ENCODE measurements at regions of chr6 and their contacts with region 1.

Region 1: DNA sequence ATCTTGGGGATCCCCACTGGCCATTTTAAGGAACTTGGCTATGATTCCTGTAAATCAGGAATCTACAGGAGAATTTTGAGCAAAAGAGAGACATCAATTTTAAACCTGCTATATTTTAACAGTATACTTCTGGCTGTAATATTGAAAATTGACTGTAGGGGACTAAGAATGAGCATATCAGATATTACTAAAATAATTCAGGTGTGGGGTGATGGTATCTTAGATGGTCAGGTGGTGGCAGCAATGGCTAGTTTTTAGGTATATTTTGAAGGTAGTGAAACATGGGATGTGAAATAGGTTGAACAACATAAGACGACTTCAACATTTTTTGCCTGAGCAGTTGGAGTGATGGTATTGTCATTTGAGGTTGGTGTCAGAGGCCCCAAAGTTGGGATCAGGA is 32.1 kb downstream of the FAM83B start:
- DNase-seq: peak; percentile 24
- H3K4me3 Mint-ChIP-seq: no peak overlapping the region
- H3K27ac Mint-ChIP-seq: no peak overlapping the region
- H3K4me1 Mint-ChIP-seq: peaks cover 18% of the 10 kb centered on the region
- H3K27me3 Mint-ChIP-seq: no peaks in the 10 kb centered on the region
- CTCF ChIP-seq: no peak

Region 2: DNA sequence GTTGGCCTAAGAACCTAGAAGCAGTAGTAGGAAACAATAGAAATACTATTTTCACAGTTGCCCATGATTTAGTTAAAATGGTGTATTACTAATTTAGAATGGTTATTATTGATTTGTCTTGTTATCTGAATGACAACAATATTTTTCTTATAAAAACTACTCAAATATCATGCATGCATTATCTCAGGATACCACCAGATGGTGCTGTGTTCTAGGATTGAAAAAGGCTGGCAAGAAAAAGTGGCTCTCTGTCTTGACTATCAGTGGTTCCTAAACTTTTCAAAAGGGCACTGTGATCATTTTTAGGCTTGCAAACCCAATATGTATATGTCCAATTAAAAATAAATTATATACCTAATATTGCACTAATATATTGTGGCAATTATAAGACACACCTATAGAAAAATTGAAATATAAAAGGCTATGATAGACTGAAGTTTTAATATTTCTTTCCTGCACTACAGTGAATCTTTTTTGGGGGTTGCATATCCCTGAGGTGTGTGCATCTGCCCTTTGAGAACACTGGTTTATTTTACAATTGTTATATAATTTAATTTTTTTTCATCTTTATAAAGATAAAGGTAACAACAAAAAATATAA is 899.1 kb before region 1 on chr6:
- CTCF ChIA-PET with region 1: no interaction called
- intact Hi-C with region 1: loop called (anchors 5 kb)
- DNase-seq: peak; percentile 43
- H3K4me3 Mint-ChIP-seq: no peak overlapping the region
- H3K27ac Mint-ChIP-seq: no peak overlapping the region
- H3K4me1 Mint-ChIP-seq: peaks cover 37% of the 10 kb centered on the region
- H3K27me3 Mint-ChIP-seq: no peaks in the 10 kb centered on the region
- CTCF ChIP-seq: peak; percentile 72

Region 3: GRCh38 chr6:54860739-54861138 is 17.9 kb before region 1 on chr6:
- CTCF ChIA-PET with region 1: interaction called, 3 read pairs
- intact Hi-C with region 1: loop called (anchors 2 kb)
- DNase-seq: peak; percentile 69
- H3K4me3 Mint-ChIP-seq: peak overlapping the region; percentile 64
- H3K27ac Mint-ChIP-seq: peak overlapping the region; percentile 98
- H3K4me1 Mint-ChIP-seq: peaks cover 74% of the 10 kb centered on the region
- H3K27me3 Mint-ChIP-seq: no peaks in the 10 kb centered on the region
- CTCF ChIP-seq: no peak

Region 4: GRCh38 chr6:54980511-54981275 is 102.0 kb after region 1 on chr6:
- CTCF ChIA-PET with region 1: no interaction called
- intact Hi-C with region 1: loop called (anchors 10 kb)
- DNase-seq: no peak
- H3K4me3 Mint-ChIP-seq: no peak overlapping the region
- H3K27ac Mint-ChIP-seq: peak overlapping the region; percentile 76
- H3K4me1 Mint-ChIP-seq: peaks cover 20% of the 10 kb centered on the region
- H3K27me3 Mint-ChIP-seq: no peaks in the 10 kb centered on the region
- CTCF ChIP-seq: no peak

Region 5: GRCh38 chr6:55069132-55069781 is 190.6 kb after region 1 on chr6:
- CTCF ChIA-PET with region 1: no interaction called
- intact Hi-C with region 1: loop called (anchors 2 kb)
- DNase-seq: peak; percentile 52
- H3K4me3 Mint-ChIP-seq: no peak overlapping the region
- H3K27ac Mint-ChIP-seq: no peak overlapping the region
- H3K4me1 Mint-ChIP-seq: no peaks in the 10 kb centered on the region
- H3K27me3 Mint-ChIP-seq: no peaks in the 10 kb centered on the region
- CTCF ChIP-seq: peak; percentile 54

Region 6: DNA sequence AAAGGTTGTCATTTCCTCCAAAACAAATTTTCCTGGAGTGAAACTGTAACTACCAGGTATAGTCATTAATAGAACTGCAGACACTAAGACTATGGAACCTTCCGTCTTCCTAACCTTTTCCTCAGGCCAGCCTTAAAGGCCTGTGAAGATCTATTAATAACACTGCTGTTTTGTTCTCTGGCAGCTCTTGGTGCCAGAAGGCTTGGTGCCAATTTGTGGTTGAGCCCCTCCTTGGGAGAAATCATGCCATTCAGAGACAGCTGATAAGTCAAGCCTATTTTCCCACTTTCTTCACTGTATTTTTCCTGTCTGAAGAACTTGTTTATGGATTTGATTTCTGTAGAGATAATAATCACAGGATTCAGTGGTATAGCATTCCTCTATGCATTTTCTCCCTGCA is 360.4 kb after region 1 on chr6:
- CTCF ChIA-PET with region 1: no interaction called
- intact Hi-C with region 1: loop called (anchors 10 kb)
- DNase-seq: peak; percentile 50
- H3K4me3 Mint-ChIP-seq: no peak overlapping the region
- H3K27ac Mint-ChIP-seq: no peak overlapping the region
- H3K4me1 Mint-ChIP-seq: peaks cover 23% of the 10 kb centered on the region
- H3K27me3 Mint-ChIP-seq: no peaks in the 10 kb centered on the region
- CTCF ChIP-seq: no peak

Measured in Calu3 (cell line).